GM10248 (cell line): ENCODE measurements at regions of chr1 and their contacts with region 1.

Region 1: GRCh38 chr1:156838981-156839410 is 19.9 kb downstream of the INSRR start:
- DNase-seq: peak; percentile 75
- CTCF ChIP-seq: peak; percentile 86

Region 2: GRCh38 chr1:156540791-156541383 is 298.1 kb before region 1 on chr1:
- CTCF ChIA-PET with region 1: no interaction called
- POLR2A ChIA-PET with region 1: no interaction called
- DNase-seq: no peak
- CTCF ChIP-seq: no peak

Region 3: GRCh38 chr1:156797212-156797871 is 41.7 kb before region 1 on chr1:
- CTCF ChIA-PET with region 1: interaction called, 23 read pairs
- POLR2A ChIA-PET with region 1: no interaction called
- DNase-seq: peak; percentile 60
- CTCF ChIP-seq: peak; percentile 73

Region 4: DNA sequence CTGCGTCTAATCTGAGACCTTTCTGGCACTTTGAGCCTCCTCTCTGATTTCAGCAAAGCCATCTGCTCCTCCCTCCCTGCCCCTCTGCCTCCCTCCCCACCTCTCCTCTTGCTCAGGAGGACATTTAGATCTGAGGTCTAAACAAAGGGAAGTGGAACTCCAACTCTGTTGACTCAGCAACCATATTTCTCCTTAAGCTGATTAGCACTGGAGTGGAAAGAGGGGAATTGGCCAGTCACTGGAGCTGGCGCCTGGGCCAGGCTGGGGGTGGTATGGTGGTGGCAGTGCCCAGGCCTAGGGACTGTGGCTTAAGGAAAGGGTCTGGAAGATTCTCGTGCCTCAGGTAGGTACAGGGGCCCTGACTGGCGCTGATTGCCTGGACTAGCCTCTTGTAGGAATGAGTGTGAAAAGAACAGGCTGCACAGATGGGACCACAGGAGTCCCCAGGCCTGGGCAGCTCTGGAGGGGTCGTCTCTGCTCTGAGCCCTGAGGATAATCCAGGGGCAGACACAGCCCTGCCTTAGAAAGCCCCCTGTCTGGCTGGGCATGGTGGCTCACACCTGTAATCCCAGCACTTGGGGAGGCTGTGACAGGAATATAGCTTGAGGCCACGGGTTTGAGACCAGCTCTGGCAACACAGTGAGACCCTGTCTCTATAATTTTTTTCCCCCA is 34.3 kb before region 1 on chr1:
- CTCF ChIA-PET with region 1: interaction called, 15 read pairs
- POLR2A ChIA-PET with region 1: no interaction called
- DNase-seq: no peak
- CTCF ChIP-seq: no peak

Region 5: GRCh38 chr1:156813750-156814570 is 25.0 kb before region 1 on chr1:
- CTCF ChIA-PET with region 1: interaction called, 13 read pairs
- POLR2A ChIA-PET with region 1: interaction called, 3 read pairs
- DNase-seq: peak; percentile 82
- CTCF ChIP-seq: peak; percentile 58

Region 6: DNA sequence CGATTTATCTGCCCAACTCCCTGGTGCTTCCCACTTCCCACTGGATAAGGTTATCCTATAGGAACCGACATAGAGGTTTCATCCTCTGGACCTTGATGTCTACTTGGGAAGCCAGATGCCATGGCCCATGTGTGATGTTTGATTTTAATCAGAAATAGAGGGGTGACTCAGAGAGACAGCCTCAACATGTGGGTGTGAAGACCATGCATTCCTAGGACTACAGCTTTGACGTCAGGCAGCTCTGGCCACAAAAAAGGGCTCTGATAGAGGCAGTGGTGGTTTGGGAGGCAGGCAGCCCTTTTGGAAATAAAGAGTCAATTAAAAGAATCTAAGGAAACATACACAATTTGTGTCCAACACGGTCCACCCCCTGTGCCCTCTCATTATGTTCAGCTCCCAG is 17.2 kb before region 1 on chr1:
- CTCF ChIA-PET with region 1: interaction called, 38 read pairs
- POLR2A ChIA-PET with region 1: no interaction called
- DNase-seq: no peak
- CTCF ChIP-seq: no peak

Region 7: GRCh38 chr1:156852418-156852874 is 13.4 kb after region 1 on chr1:
- CTCF ChIA-PET with region 1: interaction called, 149 read pairs
- POLR2A ChIA-PET with region 1: no interaction called
- DNase-seq: no peak
- CTCF ChIP-seq: no peak

Region 8: DNA sequence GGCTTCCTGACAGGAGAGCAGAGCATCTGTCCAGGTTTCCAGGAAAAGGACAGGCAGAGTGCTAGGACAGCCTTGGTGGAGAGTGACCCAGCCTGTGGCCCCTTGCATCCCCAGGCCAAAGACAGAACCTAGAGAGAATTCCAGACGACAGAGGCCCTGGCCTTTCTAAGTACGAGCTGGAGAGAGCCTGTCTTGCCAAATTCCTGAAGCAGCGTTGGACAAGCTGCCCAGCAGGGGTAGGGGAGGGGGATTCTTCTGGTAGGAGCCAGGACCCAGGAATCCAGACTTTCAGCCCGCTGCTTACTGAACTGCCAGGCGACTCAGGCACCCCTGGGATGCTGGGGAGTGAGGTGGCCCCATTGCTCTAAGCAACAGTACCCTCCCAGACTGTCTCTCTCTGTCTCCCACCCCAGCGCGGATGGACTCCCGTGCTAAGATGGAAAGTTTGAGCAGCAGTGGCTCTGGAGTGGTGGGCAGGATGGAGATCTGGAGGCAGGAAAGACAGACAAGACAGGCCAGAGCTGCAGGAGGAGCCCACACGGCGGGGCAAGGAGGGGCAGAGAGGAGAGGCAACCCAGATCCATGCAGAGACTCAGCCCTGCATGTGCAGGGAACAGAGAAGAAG is 45.7 kb after region 1 on chr1:
- CTCF ChIA-PET with region 1: interaction called, 52 read pairs
- POLR2A ChIA-PET with region 1: no interaction called
- DNase-seq: no peak
- CTCF ChIP-seq: no peak

Region 9: GRCh38 chr1:156923670-156924477 is 84.9 kb after region 1 on chr1:
- CTCF ChIA-PET with region 1: no interaction called
- POLR2A ChIA-PET with region 1: no interaction called
- DNase-seq: no peak
- CTCF ChIP-seq: no peak